ENCODE measurements at regions of chr3 and their contacts with region 1.

Region 1: DNA sequence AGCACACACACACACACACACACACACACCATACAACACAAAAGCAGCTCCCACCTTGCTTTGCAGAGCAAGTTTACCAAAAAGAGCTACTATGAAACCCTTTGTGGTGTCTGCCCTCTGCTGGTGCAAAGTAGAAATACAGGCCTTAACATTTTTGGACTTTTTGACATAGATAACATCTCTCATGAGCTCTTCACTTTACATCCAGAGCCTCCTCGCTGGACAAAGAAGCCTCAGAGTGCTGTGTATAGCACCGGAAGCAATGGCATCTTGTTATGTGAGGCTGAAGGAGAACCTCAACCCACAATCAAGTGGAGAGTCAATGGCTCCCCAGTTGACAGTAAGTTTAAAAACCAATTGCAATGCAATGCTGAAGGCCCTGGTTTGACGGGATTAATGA is 157.9 kb downstream of the CHL1 start:
- DNase-seq: peak; percentile 41
- ATAC-seq: no peak
- H3K4me3 ChIP-seq: no peak overlapping the region
- H3K27ac ChIP-seq: no peak overlapping the region
- H3K4me1 ChIP-seq: no peaks in the 10 kb centered on the region
- H3K27me3 ChIP-seq: no peaks in the 10 kb centered on the region
- CTCF ChIP-seq: peak; percentile 75

Region 2: DNA sequence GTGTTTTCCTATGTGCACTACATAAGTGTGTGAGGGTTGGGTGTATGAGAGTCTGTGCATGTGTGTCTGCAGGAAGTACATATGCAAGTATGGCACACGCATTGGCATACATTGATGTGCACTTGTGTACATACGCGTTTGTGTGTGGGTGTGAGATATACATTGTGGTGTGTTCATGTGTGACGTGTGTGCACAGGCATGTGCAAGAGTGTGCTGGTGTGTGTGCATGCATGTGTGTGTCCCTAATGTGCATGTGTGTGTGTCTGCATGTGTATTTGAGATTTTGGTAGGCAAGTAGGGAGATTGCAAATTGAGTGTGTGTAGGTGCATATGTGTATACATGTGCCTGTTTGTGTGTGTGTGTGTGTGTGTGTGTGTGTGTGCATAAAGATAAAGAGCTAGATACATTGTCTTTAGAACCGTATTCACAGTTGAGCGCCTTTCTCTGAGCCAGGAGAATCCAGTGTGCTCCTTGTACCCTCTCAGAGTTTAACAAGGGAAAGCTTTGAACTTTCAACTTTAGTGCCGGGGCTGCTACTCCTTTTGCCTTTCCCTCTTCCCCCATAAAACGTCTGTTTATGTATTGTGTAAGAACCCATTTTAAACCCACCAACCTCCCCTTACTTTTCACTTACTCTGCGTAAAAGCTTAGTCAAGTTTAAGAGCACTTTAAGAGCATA is 310.3 kb before region 1 on chr3:
- CTCF ChIA-PET with region 1: no interaction called
- POLR2A ChIA-PET with region 1: no interaction called
- in situ Hi-C with region 1: no loop called
- intact Hi-C with region 1: loop called (anchors 1 kb)
- DNase-seq: no peak
- ATAC-seq: no peak
- H3K4me3 ChIP-seq: no peak overlapping the region
- H3K27ac ChIP-seq: no peak overlapping the region
- H3K4me1 ChIP-seq: no peaks in the 10 kb centered on the region
- H3K27me3 ChIP-seq: no peaks in the 10 kb centered on the region
- CTCF ChIP-seq: no peak

Region 3: DNA sequence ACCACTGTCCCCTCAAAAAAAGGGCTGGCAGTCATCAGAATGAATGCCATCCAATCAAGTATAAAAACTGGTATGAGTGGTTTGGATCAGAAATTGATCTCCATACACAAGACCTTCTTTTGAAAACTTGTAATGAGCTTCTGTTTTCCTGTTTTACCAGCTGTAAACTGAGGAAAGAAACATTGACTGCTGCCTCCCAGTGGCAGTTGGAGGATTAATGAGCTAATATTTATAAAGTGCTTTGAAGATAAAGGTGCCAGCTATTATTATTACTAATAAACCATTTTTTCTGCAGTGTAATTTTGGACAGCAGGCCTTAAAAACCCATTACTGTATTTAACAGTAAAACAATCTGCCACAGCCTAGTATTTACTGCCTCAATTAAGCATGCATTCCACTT is 146.5 kb before region 1 on chr3:
- CTCF ChIA-PET with region 1: no interaction called
- POLR2A ChIA-PET with region 1: no interaction called
- in situ Hi-C with region 1: no loop called
- intact Hi-C with region 1: no loop called
- DNase-seq: no peak
- ATAC-seq: no peak
- H3K4me3 ChIP-seq: no peak overlapping the region
- H3K27ac ChIP-seq: no peak overlapping the region
- H3K4me1 ChIP-seq: no peaks in the 10 kb centered on the region
- H3K27me3 ChIP-seq: no peaks in the 10 kb centered on the region
- CTCF ChIP-seq: no peak

Region 4: DNA sequence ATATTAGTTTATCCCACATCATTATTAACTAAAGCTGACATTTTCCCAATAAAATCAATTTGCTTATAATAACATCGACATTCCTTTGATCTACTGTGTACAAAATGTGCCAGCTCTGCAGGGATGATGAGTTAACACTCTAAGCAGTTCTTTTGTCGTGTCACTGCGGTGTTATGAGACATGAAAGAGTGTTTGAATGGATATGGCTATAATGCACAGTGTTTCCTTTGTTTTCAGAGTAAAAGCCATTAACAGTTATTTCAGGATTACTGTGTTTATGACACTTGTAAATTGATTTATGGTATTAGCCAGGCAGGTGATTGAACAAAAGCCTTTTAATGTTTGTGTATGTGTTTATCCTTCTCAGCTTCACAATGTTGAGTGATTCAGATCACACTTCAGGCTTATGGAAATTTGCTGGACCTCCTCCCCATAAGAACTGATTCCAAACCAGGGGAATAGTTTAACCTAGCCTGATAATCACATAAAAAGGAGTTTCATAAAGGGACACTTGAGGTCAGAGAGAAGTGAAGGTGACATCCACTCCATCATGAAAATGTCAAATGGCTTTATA is 42.2 kb before region 1 on chr3:
- CTCF ChIA-PET with region 1: no interaction called
- POLR2A ChIA-PET with region 1: no interaction called
- in situ Hi-C with region 1: no loop called
- intact Hi-C with region 1: no loop called
- DNase-seq: no peak
- ATAC-seq: no peak
- H3K4me3 ChIP-seq: no peak overlapping the region
- H3K27ac ChIP-seq: no peak overlapping the region
- H3K4me1 ChIP-seq: no peaks in the 10 kb centered on the region
- H3K27me3 ChIP-seq: no peaks in the 10 kb centered on the region
- CTCF ChIP-seq: no peak

Region 5: DNA sequence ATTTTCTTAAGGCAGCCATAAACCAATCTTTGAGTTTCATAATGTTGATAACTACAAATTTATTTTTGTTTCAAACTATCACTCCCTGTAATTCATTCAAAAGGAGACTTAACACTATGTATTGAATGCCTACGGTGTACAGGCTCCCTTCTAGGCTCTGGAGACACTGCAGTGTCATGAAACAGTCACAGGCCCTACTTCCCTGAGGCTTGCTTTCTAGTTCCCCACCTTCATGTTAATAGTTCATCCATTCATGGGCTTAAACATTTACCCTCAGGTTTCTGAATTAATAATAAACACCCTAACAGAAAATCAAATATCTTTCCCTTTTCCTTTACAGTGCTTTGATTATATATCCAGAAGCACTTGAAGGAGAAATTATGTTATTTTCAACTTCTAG is 10.8 kb after region 1 on chr3:
- CTCF ChIA-PET with region 1: no interaction called
- POLR2A ChIA-PET with region 1: no interaction called
- in situ Hi-C with region 1: no loop called
- intact Hi-C with region 1: no loop called
- DNase-seq: no peak
- ATAC-seq: no peak
- H3K4me3 ChIP-seq: no peak overlapping the region
- H3K27ac ChIP-seq: no peak overlapping the region
- H3K4me1 ChIP-seq: no peaks in the 10 kb centered on the region
- H3K27me3 ChIP-seq: no peaks in the 10 kb centered on the region
- CTCF ChIP-seq: no peak

Measured in Panc1 (cell line).